Mammary epithelial cell (primary cell): ENCODE measurements at regions of chr2 and their contacts with region 1.

Region 1: DNA sequence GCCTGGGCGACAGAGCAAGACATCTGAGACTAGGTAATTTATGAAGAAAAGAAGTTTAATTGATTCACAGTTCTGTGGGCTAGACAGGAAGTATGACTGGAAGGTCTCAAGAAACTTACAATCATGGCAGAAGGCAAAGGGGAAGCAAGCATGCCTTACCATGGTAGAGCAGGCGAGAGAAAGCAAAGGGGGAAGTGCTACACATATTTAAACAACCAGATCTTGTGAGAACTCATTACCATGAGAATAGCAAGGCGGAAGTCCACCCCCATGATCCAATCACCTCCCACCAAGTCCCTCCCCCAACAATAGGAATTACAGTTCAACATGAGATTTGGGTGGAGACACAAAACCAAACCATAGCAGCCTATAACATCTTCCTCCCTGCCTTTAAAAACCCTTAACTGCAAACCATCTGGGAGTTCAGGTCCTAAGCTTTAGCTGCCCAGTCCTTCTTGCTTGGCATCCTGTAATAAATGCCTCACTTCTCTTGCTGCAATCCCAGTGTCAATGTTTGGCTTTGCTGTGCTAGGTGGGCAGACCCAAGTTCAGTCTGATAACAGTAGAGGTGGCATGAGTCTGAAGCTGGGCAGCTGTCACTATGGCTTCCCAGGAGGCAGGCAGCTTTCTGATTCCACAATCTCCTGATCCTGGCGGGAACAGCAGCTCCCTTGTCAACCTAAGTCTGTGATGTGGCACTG is 11.2 kb upstream of the SP5 start:
- DNase-seq: no peak
- H3K4me3 ChIP-seq: no peak overlapping the region
- H3K27ac ChIP-seq: no peak overlapping the region
- H3K4me1 ChIP-seq: no peaks in the 10 kb centered on the region
- H3K27me3 ChIP-seq: peaks cover 4% of the 10 kb centered on the region
- CTCF ChIP-seq: no peak

Region 2: GRCh38 chr2:170610615-170611014 is 93.3 kb before region 1 on chr2:
- CTCF ChIA-PET with region 1: no interaction called
- dilution Hi-C with region 1: loop called (anchors 5 kb)
- in situ Hi-C with region 1: no loop called
- intact Hi-C with region 1: no loop called
- DNase-seq: no peak
- H3K4me3 ChIP-seq: no peak overlapping the region
- H3K27ac ChIP-seq: no peak overlapping the region
- H3K4me1 ChIP-seq: no peaks in the 10 kb centered on the region
- H3K27me3 ChIP-seq: no peaks in the 10 kb centered on the region
- CTCF ChIP-seq: no peak

Region 3: DNA sequence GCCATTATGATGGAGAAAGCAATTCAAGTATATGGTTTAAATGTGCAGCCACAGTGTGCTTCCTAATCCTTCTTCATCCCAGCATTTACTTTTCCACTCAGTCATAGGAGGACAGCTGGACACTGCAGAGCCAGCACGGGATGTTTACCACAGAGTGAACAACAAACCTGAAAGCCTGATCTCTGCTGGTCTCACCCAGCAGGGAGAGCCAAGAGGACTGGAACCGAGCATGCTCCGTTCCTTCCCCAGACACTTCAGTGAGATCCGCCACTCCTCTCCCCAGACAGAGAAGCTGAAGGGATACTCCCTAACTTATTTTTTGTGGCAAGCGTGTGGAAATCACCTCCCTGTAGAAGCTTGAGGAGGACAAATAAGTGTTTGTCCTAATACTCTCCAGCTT is 201.9 kb after region 1 on chr2:
- CTCF ChIA-PET with region 1: no interaction called
- dilution Hi-C with region 1: no loop called
- in situ Hi-C with region 1: no loop called
- intact Hi-C with region 1: no loop called
- DNase-seq: no peak
- H3K4me3 ChIP-seq: no peak overlapping the region
- H3K27ac ChIP-seq: no peak overlapping the region
- H3K4me1 ChIP-seq: no peaks in the 10 kb centered on the region
- H3K27me3 ChIP-seq: no peaks in the 10 kb centered on the region
- CTCF ChIP-seq: no peak